ENCODE measurements at regions of chr2 and their contacts with region 1.

Region 1: GRCh38 chr2:85602476-85603234 is at the start of gene TMEM150A:
- DNase-seq: peak; percentile 91
- ATAC-seq: peak; percentile 94
- H3K4me3 ChIP-seq: peak within 1 kb of the TSS; percentile 79
- H3K27ac ChIP-seq: peak within 1 kb of the TSS; percentile 6; the same call in 1 of the 2 replicates
- H3K4me1 ChIP-seq: peaks cover 4% of the 10 kb centered on the region; the same call in 1 of the 2 replicates
- H3K27me3 ChIP-seq: no peaks in the 10 kb centered on the region
- CTCF ChIP-seq: no peak; the same call in 1 of the 2 replicates
- total RNA-seq, gene TMEM150A: 3.9 and 4.9 TPM in 2 replicates

Region 2: DNA sequence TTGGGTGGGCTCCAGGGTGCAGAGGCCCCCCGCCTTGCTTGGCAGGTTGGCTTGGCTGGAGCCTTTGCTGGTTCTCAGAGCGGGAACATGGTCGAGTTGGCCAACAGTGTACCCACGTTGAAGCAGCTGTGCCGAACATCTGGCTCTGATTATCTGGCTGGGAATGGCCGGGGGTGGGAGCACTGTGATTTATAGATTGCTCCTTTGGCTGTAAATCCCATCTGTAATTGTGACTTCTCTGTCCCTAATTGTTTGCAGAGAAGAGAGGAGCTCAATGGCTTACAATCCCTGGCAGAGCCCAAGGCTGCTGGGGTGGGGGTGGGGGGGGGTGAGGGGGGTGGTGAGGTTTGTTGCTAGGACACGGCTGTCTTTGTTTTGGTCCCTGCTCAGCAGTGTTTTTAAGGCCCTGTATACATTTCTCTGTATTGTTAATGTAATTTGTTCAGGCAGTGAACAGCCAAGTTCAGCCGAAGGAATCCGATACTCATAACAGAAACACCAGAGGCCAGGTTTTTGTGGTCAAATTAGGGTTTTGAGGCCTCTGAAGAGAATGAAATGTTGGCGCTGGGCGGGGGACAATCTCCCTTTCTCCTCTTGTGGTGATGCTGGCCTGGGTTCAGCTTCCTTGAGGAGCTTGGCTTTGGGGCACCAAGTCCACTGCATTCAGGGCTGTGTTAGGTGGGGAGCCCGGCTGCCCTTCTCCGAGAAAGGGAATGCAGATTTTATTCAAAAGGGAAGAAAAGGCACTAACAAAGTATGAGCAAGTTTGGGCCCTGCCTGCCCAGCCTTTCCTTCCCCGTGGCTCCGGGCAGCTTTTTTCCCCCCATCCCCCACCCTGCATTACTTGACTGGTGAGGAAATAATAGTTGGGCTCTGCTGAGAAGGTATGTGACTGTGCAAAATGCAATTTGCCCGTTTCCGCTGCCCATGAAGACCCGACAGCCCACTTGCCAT is 386.9 kb before region 1 on chr2:
- CTCF ChIA-PET with region 1: no interaction called
- POLR2A ChIA-PET with region 1: no interaction called
- intact Hi-C with region 1: no loop called
- DNase-seq: no peak
- ATAC-seq: no peak
- H3K4me3 ChIP-seq: no peak overlapping the region
- H3K27ac ChIP-seq: no peak overlapping the region
- H3K4me1 ChIP-seq: no peaks in the 10 kb centered on the region
- H3K27me3 ChIP-seq: no peaks in the 10 kb centered on the region
- CTCF ChIP-seq: no peak

Region 3: GRCh38 chr2:85288244-85288725 is 314.4 kb before region 1 on chr2:
- CTCF ChIA-PET with region 1: no interaction called
- POLR2A ChIA-PET with region 1: no interaction called
- intact Hi-C with region 1: no loop called
- DNase-seq: peak; percentile 88
- ATAC-seq: peak; percentile 80
- H3K4me3 ChIP-seq: peak overlapping the region; percentile 14
- H3K27ac ChIP-seq: peak overlapping the region; percentile 71
- H3K4me1 ChIP-seq: peaks cover 27% of the 10 kb centered on the region
- H3K27me3 ChIP-seq: no peaks in the 10 kb centered on the region
- CTCF ChIP-seq: no peak

Region 4: DNA sequence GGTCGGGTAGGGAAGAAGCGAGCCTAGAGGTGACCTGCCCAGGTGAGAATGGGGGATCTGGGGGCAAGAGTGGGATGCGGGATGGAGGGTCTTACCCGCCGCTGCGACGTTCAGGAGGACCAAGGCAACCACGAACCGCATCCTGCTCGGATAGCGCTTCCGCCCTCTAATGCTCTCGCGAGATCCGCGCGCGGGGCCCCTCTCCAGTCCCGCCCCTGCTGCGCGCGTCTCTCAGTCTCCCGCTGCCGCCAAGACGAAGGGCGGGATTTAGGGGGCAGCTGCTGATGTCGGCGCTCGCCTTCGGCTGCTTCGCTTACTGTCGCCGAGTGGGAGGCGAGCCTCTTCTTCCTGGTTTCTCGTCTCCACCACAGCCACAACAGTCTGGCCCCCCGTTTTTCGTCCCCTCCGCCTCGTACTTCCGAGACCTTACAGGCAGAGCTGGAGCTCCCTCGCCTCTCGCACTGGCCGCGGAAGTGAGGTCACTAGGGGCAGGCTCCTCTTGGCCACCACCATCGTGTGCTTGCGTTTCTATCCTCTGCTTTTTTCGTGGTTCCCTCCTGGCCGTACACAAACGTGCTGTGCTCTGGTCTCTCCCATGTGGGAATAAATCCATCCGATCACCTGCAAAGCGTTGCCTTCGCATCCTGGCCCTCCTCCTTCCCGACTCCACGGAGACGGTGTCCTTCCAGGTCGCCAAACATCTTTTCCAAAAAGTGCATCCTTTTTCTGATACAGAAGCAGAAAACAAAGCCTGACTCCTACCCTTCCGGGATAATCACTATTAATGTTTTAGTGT is 274.6 kb before region 1 on chr2 and contains the start of gene TGOLN2:
- CTCF ChIA-PET with region 1: no interaction called
- POLR2A ChIA-PET with region 1: no interaction called
- intact Hi-C with region 1: loop called (anchors 5 kb)
- DNase-seq: peak; percentile 93
- ATAC-seq: peak; percentile 96
- H3K4me3 ChIP-seq: peak within 1 kb of the TSS; percentile 92
- H3K27ac ChIP-seq: peak within 1 kb of the TSS; percentile 70
- H3K4me1 ChIP-seq: peaks cover 24% of the 10 kb centered on the region
- H3K27me3 ChIP-seq: no peaks in the 10 kb centered on the region
- CTCF ChIP-seq: no peak
- total RNA-seq, gene TGOLN2: 48.9 and 67.3 TPM in 2 replicates

Region 5: DNA sequence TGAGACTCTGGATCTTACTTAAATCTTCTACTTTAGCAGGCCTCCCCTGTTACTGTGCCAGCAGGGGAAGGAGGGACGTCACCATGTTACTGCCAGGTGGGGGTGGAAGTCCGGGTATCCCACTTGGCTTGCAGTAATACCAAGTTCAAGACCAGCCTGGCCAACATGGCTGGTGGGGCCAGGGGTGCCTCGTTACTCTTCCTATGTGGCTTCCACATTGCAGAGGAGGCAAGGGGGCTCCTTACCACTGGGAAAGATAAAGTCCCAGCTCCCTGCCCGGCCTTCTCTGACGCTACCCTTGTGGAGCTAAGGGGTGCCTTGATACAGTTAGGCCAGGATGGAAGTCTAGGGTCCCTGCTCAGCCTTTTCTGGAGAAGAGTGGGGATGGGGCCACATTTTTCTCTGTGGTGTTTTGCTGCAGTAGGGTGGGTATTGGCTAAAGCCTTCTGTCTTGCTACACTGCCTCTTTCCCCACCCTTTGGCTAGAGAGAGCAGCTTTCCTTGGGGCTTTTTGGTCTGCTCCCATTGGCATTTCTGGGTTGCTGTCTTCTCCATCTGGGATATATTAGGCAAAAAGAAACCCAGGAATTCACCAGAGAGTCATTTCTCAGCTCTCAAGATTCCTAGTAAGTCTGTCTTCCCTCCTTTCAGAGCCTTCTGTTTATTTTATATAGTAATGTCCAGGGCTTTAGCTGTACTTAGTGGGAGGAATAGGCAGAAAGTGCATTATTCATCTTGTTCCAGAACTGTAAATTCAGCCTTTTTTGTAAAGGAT is 226.2 kb before region 1 on chr2:
- CTCF ChIA-PET with region 1: no interaction called
- POLR2A ChIA-PET with region 1: no interaction called
- intact Hi-C with region 1: no loop called
- DNase-seq: no peak
- ATAC-seq: no peak
- H3K4me3 ChIP-seq: no peak overlapping the region
- H3K27ac ChIP-seq: no peak overlapping the region
- H3K4me1 ChIP-seq: peaks cover 4% of the 10 kb centered on the region; the same call in 1 of the 2 replicates
- H3K27me3 ChIP-seq: no peaks in the 10 kb centered on the region
- CTCF ChIP-seq: no peak

Region 6: GRCh38 chr2:85561317-85561979 is 41.2 kb before region 1 on chr2 and contains the start of gene GGCX:
- CTCF ChIA-PET with region 1: no interaction called
- POLR2A ChIA-PET with region 1: no interaction called
- intact Hi-C with region 1: loop called (anchors 2 kb)
- DNase-seq: peak; percentile 96
- ATAC-seq: peak; percentile 95
- H3K4me3 ChIP-seq: peak within 1 kb of the TSS; percentile 88
- H3K27ac ChIP-seq: peak within 1 kb of the TSS; percentile 43
- H3K4me1 ChIP-seq: peaks cover 10% of the 10 kb centered on the region
- H3K27me3 ChIP-seq: no peaks in the 10 kb centered on the region
- CTCF ChIP-seq: no peak
- total RNA-seq, gene GGCX: 34.8 and 46.7 TPM in 2 replicates

Region 7: DNA sequence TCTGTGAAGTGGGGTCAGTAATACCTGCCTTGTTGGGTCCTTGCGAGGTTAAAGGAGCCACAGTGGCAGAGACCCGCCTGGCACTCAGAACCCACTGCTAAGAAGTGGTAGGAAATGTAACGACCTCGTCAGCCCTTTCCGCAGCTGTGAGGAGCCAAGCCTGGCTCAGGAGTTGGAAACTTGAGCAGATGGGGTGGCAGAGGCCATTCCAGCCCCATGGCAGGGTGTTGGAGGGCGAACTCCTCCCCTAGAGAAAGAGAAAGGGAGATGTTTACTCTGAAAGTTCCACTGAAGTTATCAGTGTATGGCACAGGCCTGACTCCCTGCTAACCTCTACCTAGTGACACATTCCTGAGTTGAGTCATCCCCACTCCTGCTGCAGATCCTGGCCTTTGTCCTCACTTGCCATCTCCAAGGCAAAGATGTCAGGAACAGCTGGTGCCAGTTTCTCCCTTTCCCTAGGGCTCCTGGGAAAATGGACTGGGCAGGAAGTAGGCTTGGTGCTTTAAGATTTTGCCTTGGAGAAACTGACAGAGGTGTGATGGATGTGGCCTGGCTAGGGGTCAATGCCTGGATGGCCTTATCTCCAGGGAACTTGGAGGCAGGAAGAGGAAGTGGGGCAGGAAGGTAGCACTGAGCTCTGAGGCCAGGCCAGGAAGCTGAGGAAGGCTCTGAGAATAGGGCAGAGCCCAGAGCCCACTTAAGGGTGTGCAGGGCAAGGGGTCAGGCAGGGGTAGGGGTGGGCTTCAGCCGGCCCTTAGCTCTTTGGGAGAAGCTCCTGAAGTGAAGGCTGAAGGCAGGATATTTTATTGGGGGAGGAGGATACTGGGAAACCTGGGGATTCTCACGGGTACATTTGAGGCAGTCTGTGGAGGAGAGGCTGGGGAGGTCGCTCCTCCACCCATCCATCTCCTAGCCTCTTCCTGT is 17.5 kb before region 1 on chr2:
- CTCF ChIA-PET with region 1: no interaction called
- POLR2A ChIA-PET with region 1: no interaction called
- intact Hi-C with region 1: loop called (anchors 2 kb)
- DNase-seq: peak; percentile 84
- ATAC-seq: peak; percentile 95
- H3K4me3 ChIP-seq: no peak overlapping the region
- H3K27ac ChIP-seq: peak overlapping the region; percentile 42
- H3K4me1 ChIP-seq: peaks cover 17% of the 10 kb centered on the region
- H3K27me3 ChIP-seq: no peaks in the 10 kb centered on the region
- CTCF ChIP-seq: no peak

Measured in PC-3 (cell line).